BJ (cell line): ENCODE measurements at regions of chr2 and their contacts with region 1.

Region 1: DNA sequence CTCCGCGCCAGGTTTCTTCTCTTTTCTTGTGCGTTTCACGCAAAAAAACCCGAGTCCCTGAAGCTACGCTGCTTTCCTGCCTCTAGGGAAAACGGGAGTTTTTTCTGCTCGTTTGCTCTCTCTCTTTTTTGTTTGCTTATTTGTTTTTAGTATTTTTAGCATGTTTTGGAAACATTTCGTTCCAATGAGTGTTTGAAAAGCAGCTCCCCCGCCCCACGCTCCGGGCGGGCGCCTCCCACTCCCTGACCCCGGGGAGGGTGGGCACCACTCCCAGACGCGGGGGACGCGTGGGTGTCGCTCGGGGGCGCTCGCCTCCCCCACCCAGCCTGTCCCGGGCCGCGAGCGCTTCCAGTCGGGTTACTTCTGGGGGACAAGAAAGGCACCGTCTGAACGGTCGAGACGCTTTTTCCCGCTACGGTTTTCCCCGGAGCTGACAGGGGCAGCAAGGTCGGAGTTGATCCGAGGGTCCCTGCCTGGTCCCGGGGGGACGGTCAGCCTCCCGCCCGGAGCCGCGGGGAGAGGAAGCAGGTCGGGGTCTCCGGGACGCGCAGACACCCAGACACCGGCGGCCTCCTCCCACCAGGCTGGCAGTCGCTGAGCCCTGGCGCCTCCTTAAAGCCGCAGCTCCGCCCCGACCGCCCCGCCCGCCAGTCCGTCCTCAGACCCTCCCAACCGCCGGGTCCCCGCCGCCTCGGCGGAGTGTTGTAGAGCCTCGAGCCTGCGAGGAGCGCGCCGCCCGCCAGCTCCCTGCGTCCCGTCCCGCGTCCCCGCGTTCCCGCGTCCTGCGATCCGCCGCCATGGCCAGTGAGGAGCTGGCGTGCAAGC is at the start of gene EFHD1:
- DNase-seq: peak; percentile 35
- H3K4me3 ChIP-seq: peak within 1 kb of the TSS; percentile 55
- H3K27me3 ChIP-seq: peaks cover 2% of the 10 kb centered on the region; the same call in 1 of the 2 replicates
- CTCF ChIP-seq: no peak
- polyA plus RNA-seq, gene EFHD1: 60.0 and 76.5 TPM in 2 replicates

Region 2: DNA sequence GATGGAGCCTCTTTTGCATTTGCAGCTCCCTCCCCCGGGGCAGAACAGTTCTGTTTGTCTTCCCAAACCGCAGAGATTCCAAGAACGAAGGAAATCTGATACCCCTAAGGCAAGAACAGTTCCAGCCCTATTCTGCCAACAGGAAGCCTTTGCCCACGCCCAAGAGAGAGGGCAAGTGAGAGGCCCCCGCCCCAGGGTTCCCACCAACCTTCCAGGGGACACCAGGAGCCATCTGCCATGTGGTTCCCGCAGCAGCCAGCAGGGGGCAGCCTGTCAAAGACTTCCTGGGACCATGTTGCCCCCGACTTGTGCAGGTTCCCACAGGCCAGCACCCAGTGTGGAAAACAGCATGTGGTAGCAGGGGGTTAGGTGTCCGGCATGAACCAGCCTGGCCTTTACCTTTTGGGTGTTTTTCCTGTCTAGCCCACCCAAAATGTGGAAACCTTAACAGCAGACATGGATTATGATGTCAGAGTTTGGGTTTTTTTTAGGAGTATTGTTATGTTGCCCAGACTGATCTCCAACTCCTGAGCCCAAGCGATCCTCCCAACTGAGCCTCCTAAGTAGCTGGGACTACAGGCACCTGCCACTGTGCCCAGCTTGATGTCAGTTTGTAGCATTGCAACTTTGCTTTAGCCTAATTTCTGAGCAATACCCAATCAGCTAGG is 21.4 kb before region 1 on chr2:
- CTCF ChIA-PET with region 1: interaction called, 20 read pairs
- POLR2A ChIA-PET with region 1: no interaction called
- DNase-seq: peak; percentile 58
- H3K4me3 ChIP-seq: no peak overlapping the region
- H3K27me3 ChIP-seq: no peaks in the 10 kb centered on the region
- CTCF ChIP-seq: peak; percentile 91